ENCODE measurements at regions of chr19 and their contacts with region 1.

Region 1: DNA sequence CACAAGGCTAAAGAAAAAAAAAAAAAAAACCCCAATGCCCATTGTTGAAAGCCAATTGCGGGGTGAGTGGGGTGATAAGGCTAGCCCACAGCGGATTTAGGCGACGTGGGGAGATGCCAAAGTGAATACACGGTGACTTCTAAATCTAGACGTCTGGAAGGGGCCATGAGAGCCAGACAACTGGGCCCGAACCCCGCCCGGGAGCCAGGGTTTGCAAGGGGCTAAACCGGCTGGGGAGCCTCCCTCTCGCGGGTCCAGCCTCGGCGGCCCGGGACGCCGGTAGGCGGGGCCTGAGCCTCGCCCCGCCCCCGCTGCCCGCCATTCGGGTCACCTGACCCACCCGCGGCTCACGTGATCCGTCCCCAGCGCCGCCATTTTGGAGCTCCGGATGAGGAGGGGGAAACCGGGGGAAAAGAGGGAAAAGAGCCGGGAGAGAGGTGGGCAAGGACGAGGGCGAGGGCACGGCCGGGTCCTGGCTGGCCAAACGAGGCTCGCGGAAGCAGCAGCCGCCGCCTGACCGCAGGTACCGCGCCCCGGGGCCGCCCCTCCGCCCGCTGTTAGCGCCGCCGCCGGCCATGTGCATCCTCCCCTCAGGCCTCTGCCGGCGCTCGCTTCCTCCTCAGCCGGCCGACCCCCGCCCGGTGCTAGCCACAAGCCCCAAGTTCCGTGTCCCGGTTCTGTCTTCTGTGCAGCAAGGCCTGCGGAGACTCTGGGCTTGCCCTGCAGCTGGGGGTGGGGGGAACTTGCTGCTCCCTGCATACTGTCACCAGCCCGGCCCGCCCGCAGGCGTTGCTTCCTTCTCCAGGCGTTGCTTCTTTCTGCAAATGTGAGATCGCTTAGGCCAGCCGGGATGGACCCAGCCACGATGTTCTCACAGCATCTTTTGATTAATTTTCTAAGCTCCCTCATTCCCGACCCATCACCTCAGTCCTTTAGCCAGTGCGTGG is at the start of gene ZNF507:
- DNase-seq: peak; percentile 78
- H3K4me3 Mint-ChIP-seq: peak within 1 kb of the TSS; percentile 89
- H3K27ac Mint-ChIP-seq: peak within 1 kb of the TSS; percentile 90
- H3K4me1 Mint-ChIP-seq: peaks cover 26% of the 10 kb centered on the region
- H3K27me3 Mint-ChIP-seq: peaks cover 5% of the 10 kb centered on the region
- total RNA-seq, gene ZNF507: 29.5 and 29.6 TPM in 2 replicates

Region 2: DNA sequence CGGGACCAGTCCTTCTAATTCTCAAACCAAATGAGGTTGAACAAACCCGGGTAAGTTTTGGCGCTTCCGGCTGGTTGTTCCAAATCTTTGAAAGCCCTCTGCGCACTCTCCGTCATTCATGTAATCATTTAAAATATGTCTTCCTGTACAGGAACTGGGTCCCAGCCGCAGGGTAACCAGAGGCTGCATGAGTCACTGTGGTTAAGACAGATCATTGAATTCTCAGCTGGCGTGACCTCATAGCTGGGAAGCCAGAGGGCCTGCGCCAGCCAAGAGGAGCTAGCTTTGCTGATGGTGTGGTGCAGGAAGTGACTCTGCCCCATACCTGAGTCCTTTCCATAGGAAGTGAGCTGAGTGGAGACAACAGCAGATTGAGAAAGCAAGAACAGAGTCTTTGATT is 1131.4 kb before region 1 on chr19:
- intact Hi-C with region 1: loop called (anchors 10 kb)
- DNase-seq: peak; percentile 89
- H3K4me3 Mint-ChIP-seq: peak overlapping the region; percentile 72
- H3K27ac Mint-ChIP-seq: peak overlapping the region; percentile 96
- H3K4me1 Mint-ChIP-seq: peaks cover 28% of the 10 kb centered on the region
- H3K27me3 Mint-ChIP-seq: no peaks in the 10 kb centered on the region

Region 3: GRCh38 chr19:32405431-32406161 is 60.1 kb after region 1 on chr19 and contains the start of gene DPY19L3:
- intact Hi-C with region 1: loop called (anchors 2 kb)
- DNase-seq: peak; percentile 89
- H3K4me3 Mint-ChIP-seq: peak within 1 kb of the TSS; percentile 83
- H3K27ac Mint-ChIP-seq: peak within 1 kb of the TSS; percentile 78
- H3K4me1 Mint-ChIP-seq: peaks cover 4% of the 10 kb centered on the region
- H3K27me3 Mint-ChIP-seq: no peaks in the 10 kb centered on the region
- total RNA-seq, gene DPY19L3: 16.7 and 19.4 TPM in 2 replicates

Region 4: GRCh38 chr19:32464279-32464678 is 118.7 kb after region 1 on chr19:
- intact Hi-C with region 1: loop called (anchors 10 kb)
- DNase-seq: no peak
- H3K4me3 Mint-ChIP-seq: no peak overlapping the region
- H3K27ac Mint-ChIP-seq: no peak overlapping the region
- H3K4me1 Mint-ChIP-seq: peaks cover 8% of the 10 kb centered on the region
- H3K27me3 Mint-ChIP-seq: no peaks in the 10 kb centered on the region

Measured in activated T-helper 2 cell treated with anti-CD3 and anti-CD28 coated beads, Interferon-gamma antibody, Interleukin-2, Interleukin-4, amounts not matched to agents 10 μg/mL and 5 μg/mL and 100 μg/mL, durations not matched to agents 14 hours and 24 hours and 36 hours (primary cell).